Activated B cell treated with CpG ODN at 0.5 μM for 24 hours (primary cell): ENCODE measurements at regions of chr3 and their contacts with region 1.

Region 1: DNA sequence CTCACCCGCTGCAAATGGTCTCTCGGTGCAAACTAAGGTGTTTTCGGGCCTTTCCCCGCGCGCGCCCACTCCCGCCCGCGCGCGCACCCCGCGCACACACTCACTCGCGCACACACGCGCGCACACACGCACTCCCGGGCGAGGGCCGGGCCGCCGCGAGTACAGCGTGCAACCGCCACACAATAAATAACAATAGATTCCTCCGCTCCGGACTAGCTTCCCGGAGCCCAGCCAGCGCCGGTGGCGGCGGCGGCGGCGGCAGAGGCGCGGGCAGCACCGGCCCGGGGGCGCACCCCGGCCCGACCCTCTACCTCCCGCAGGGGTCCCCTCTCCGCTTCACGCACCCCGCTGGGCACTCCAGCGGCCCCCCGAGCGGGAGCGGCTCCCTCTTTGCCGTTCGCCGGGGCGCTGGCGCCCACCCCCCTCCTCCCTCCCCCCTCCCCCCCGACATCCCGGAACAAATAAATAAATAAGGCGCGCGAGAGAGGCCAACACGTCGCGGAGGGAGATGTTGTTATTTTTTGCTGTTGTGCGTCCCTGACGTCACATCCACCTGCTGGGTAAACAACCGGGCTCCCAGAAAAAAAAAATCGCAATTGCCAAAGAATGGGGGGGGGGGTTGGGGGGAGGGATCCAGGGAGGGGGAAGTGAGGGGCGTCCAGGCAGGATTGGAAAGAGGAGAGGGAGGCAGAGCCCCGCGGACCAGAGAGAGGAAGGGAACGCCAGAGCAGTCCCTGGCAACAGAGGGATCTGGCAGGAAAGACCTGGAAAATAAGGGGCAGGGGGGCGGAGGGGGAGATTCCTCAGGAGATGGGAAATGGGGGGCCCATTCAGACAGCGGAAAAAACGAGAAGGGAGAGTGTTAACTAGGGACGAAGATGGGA is at the start of gene FOXP1:
- DNase-seq: peak; percentile 59
- ATAC-seq: peak; percentile 30
- H3K4me3 Mint-ChIP-seq: peak within 1 kb of the TSS; percentile 92
- H3K27ac Mint-ChIP-seq: peak within 1 kb of the TSS; percentile 93
- H3K4me1 Mint-ChIP-seq: peaks cover 53% of the 10 kb centered on the region
- H3K27me3 Mint-ChIP-seq: no peaks in the 10 kb centered on the region
- CTCF ChIP-seq: no peak
- total RNA-seq, gene FOXP1: 491 and 563 TPM in 2 replicates

Region 2: GRCh38 chr3:70531063-70531657 is 1052.6 kb before region 1 on chr3:
- CTCF ChIA-PET with region 1: interaction called, 8 read pairs
- POLR2A ChIA-PET with region 1: no interaction called
- intact Hi-C with region 1: loop called (anchors 1 kb)
- DNase-seq: no peak
- ATAC-seq: no peak
- H3K4me3 Mint-ChIP-seq: no peak overlapping the region
- H3K27ac Mint-ChIP-seq: no peak overlapping the region
- H3K4me1 Mint-ChIP-seq: no peaks in the 10 kb centered on the region
- H3K27me3 Mint-ChIP-seq: no peaks in the 10 kb centered on the region
- CTCF ChIP-seq: no peak

Region 3: DNA sequence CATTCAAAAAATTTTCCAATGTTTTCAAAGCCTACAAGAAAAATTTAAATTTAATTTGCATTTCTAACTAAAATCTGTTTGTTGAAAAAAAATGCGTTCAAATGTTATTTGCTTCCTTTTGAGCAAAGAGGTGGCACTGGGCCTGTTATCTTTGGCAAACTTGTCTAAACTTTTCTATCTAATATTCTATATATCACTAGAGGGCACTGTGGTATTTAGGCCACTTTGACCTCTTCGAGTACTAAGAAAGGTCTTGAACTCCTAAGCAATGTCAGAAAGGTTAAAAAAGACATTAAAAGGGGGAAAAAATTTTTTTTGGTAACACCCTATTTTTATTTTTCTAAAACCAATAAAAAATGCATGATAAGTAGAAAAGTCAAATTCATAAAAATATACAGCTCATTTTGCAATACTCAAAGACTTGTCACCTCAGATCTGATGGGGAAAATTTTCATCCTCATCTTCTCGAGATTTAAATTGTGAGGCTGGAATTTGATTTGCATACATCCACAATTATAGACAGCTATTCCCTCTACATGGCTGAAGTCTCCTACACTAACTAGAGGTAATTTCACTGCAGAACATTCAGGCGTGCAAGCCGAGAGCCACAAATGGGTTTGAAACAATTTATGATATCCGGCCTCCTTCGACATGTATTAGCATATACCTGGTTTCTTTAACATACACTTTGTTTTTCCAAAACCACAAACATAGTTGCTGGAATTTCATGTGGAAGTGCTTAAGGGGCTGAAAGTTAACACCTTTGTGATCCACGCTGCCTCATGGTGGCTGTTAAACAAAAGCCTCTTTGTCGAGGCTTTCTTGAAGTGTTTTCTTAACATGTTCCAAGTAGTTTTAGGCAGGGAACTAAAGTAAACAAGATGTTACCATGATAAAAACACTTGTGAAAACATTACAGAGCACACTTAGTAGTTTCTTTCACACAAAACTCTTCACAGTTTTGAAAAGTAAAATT is 576.7 kb before region 1 on chr3:
- CTCF ChIA-PET with region 1: interaction called, 15 read pairs
- POLR2A ChIA-PET with region 1: interaction called, 6 read pairs
- intact Hi-C with region 1: loop called (anchors 1 kb)
- DNase-seq: no peak
- ATAC-seq: peak; percentile 35
- H3K4me3 Mint-ChIP-seq: no peak overlapping the region
- H3K27ac Mint-ChIP-seq: peak overlapping the region; percentile 84
- H3K4me1 Mint-ChIP-seq: peaks cover 73% of the 10 kb centered on the region
- H3K27me3 Mint-ChIP-seq: no peaks in the 10 kb centered on the region
- CTCF ChIP-seq: peak; percentile 75

Region 4: DNA sequence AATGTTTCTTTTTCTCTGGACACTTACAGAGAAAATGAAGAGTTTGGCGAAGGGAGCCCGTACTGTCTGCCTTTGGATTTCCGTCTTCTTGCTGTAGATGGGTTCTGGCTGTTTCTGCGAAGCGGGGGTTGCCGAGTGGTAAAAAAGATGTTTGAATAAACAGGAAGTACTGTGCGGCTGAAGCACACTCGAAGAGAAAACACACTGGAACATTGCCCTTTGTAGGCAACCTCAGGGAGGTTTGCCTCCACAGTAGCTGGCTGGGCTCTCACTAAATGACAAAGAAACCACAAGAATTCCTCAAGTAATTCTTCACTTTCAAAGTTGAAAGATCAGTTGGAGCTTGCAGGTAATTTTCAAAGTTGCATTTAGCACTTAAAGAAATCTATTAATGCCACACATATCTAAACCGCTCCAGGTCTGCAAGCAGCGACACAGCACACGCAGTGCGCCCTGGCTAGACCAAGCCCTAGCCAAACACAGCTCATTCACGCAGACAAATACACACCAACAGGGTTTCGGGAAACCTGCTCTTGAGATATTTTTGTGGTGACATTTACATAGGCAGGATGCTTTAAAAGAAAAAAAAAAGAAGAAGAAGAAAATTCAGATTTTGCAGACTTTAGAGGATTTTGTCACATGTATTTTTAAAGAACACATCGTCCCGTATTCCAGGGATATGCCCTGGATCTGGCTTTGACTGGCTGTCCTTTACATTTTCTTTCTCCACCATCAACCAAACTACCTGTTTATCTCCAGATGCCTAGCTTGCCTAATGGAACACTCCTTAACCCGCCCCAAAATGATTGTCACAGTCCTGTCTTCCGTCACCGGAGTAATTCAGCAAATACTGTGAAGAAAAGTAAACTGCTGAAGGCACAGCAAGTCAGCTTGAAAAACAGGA is 453.1 kb before region 1 on chr3:
- CTCF ChIA-PET with region 1: no interaction called
- POLR2A ChIA-PET with region 1: interaction called, 59 read pairs
- intact Hi-C with region 1: loop called (anchors 1 kb)
- DNase-seq: no peak
- ATAC-seq: peak; percentile 69
- H3K4me3 Mint-ChIP-seq: peak overlapping the region; percentile 88
- H3K27ac Mint-ChIP-seq: peak overlapping the region; percentile 93
- H3K4me1 Mint-ChIP-seq: peaks cover 79% of the 10 kb centered on the region
- H3K27me3 Mint-ChIP-seq: no peaks in the 10 kb centered on the region
- CTCF ChIP-seq: no peak

Region 5: DNA sequence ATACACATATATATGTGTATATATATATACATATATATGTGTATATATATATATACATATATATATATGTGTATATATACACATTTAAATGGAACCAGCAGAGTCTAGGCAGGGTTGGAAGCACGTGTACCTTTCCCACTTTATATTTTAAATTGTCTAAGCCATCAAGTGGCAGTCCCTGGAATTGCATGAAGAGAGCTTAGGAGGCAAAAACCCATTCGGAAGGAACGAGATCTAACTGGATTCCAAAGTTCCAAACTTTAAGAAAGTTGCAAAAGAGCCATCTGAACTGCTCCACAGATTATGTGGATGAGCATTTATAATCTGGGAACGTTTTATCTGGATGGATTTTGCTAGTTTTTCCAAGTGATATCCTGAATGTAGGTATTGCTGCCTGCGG is 186.8 kb before region 1 on chr3:
- CTCF ChIA-PET with region 1: interaction called, 4 read pairs
- POLR2A ChIA-PET with region 1: interaction called, 72 read pairs
- intact Hi-C with region 1: loop called (anchors 1 kb)
- DNase-seq: no peak
- ATAC-seq: no peak
- H3K4me3 Mint-ChIP-seq: peak overlapping the region; percentile 36
- H3K27ac Mint-ChIP-seq: peak overlapping the region; percentile 72
- H3K4me1 Mint-ChIP-seq: peaks cover 85% of the 10 kb centered on the region
- H3K27me3 Mint-ChIP-seq: no peaks in the 10 kb centered on the region
- CTCF ChIP-seq: no peak

Region 6: GRCh38 chr3:71495708-71496472 is 87.9 kb before region 1 on chr3:
- CTCF ChIA-PET with region 1: interaction called, 3 read pairs
- POLR2A ChIA-PET with region 1: interaction called, 10 read pairs
- intact Hi-C with region 1: no loop called
- DNase-seq: no peak
- ATAC-seq: no peak
- H3K4me3 Mint-ChIP-seq: peak overlapping the region; percentile 39
- H3K27ac Mint-ChIP-seq: peak overlapping the region; percentile 82
- H3K4me1 Mint-ChIP-seq: peaks cover 75% of the 10 kb centered on the region
- H3K27me3 Mint-ChIP-seq: no peaks in the 10 kb centered on the region
- CTCF ChIP-seq: no peak

Region 7: GRCh38 chr3:71629289-71629688 is 45.5 kb after region 1 on chr3:
- CTCF ChIA-PET with region 1: no interaction called
- POLR2A ChIA-PET with region 1: no interaction called
- intact Hi-C with region 1: no loop called
- DNase-seq: no peak
- ATAC-seq: no peak
- H3K4me3 Mint-ChIP-seq: no peak overlapping the region
- H3K27ac Mint-ChIP-seq: no peak overlapping the region
- H3K4me1 Mint-ChIP-seq: peaks cover 8% of the 10 kb centered on the region
- H3K27me3 Mint-ChIP-seq: no peaks in the 10 kb centered on the region
- CTCF ChIP-seq: no peak

Region 8: DNA sequence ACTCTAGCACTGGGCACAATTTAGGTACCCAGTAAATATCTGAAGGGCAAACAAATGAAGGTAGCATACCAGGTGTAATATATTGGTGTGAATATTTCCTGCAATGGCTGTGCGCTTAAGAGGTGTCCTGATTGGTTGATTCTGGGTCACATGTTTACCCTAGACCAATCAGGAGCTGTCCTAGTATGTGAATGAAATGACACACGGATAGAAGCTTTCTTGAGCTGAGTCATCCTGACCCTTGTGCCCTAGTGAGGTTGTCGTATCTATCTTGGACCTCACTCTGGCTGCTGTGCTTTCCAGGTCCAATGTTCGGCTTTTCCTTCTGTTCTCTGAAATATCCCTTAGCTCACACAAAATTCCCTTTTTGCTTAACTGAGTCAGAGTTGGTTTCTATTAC is 57.9 kb after region 1 on chr3:
- CTCF ChIA-PET with region 1: no interaction called
- POLR2A ChIA-PET with region 1: no interaction called
- intact Hi-C with region 1: no loop called
- DNase-seq: no peak
- ATAC-seq: no peak
- H3K4me3 Mint-ChIP-seq: no peak overlapping the region
- H3K27ac Mint-ChIP-seq: no peak overlapping the region
- H3K4me1 Mint-ChIP-seq: no peaks in the 10 kb centered on the region
- H3K27me3 Mint-ChIP-seq: peaks cover 6% of the 10 kb centered on the region
- CTCF ChIP-seq: no peak

Region 9: GRCh38 chr3:71690341-71690841 is 106.6 kb after region 1 on chr3:
- CTCF ChIA-PET with region 1: no interaction called
- POLR2A ChIA-PET with region 1: no interaction called
- intact Hi-C with region 1: no loop called
- DNase-seq: no peak
- ATAC-seq: no peak
- H3K4me3 Mint-ChIP-seq: no peak overlapping the region
- H3K27ac Mint-ChIP-seq: no peak overlapping the region
- H3K4me1 Mint-ChIP-seq: no peaks in the 10 kb centered on the region
- H3K27me3 Mint-ChIP-seq: no peaks in the 10 kb centered on the region
- CTCF ChIP-seq: no peak